Mammary epithelial cell (primary cell): ENCODE measurements at regions of chr18 and their contacts with region 1.

Region 1: GRCh38 chr18:61992285-61992684 is 99.5 kb upstream of the RNF152 start:
- DNase-seq: peak; percentile 80
- H3K4me3 ChIP-seq: no peak overlapping the region
- H3K27ac ChIP-seq: peak overlapping the region; percentile 61
- H3K4me1 ChIP-seq: peaks cover 53% of the 10 kb centered on the region
- H3K27me3 ChIP-seq: no peaks in the 10 kb centered on the region
- CTCF ChIP-seq: no peak

Region 2: GRCh38 chr18:61949946-61950345 is 42.3 kb before region 1 on chr18:
- CTCF ChIA-PET with region 1: no interaction called
- dilution Hi-C with region 1: loop called (anchors 5 kb)
- in situ Hi-C with region 1: no loop called
- intact Hi-C with region 1: loop called (anchors 1 kb)
- DNase-seq: peak; percentile 100
- H3K4me3 ChIP-seq: peak overlapping the region; percentile 43 to 55 (median 47)
- H3K27ac ChIP-seq: peak overlapping the region; percentile 99
- H3K4me1 ChIP-seq: peaks cover 60% of the 10 kb centered on the region
- H3K27me3 ChIP-seq: no peaks in the 10 kb centered on the region
- CTCF ChIP-seq: no peak

Region 3: GRCh38 chr18:61955644-61956043 is 36.6 kb before region 1 on chr18:
- CTCF ChIA-PET with region 1: no interaction called
- dilution Hi-C with region 1: loop called (anchors 5 kb)
- in situ Hi-C with region 1: no loop called
- intact Hi-C with region 1: loop called (anchors 1 kb)
- DNase-seq: no peak
- H3K4me3 ChIP-seq: no peak overlapping the region
- H3K27ac ChIP-seq: no peak overlapping the region
- H3K4me1 ChIP-seq: peaks cover 30% of the 10 kb centered on the region
- H3K27me3 ChIP-seq: no peaks in the 10 kb centered on the region
- CTCF ChIP-seq: no peak